Upper lobe of right lung (tissue), 1 donor: ENCODE measurements at regions of chr2 and their contacts with region 1.

Region 1: DNA sequence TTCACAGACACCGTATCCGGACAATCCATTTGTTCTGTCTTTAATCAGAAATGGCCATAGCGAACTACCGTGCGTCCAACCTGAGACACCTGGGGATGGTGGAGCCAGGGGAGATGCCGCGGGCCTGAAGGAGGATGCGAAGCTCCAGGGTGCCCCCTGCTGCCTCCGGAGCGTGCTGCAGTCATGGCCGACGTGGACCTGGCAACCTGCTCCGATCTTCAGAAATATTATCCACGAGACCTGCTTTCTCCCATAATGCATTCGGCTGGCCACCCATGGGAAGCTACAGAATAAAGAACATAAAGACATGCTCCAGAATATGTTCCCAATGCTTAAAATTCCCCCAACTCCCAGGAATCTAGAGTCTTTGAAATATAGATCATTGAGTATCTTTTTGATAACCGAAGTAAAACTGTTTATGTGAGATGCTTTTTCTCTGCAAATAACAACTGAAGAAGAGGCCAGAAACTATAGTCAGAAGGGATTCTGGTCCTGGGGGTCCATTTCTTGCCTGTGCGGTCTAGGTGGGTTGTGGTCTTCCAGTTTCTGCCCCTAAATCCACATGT is 30.7 kb upstream of the SLC66A3 start:
- DNase-seq: peak; percentile 80
- ATAC-seq: peak; percentile 83
- H3K4me3 ChIP-seq: no peak overlapping the region
- H3K27ac ChIP-seq: no peak overlapping the region
- H3K4me1 ChIP-seq: peaks cover 7% of the 10 kb centered on the region
- H3K27me3 ChIP-seq: no peaks in the 10 kb centered on the region
- CTCF ChIP-seq: peak; percentile 74

Region 2: DNA sequence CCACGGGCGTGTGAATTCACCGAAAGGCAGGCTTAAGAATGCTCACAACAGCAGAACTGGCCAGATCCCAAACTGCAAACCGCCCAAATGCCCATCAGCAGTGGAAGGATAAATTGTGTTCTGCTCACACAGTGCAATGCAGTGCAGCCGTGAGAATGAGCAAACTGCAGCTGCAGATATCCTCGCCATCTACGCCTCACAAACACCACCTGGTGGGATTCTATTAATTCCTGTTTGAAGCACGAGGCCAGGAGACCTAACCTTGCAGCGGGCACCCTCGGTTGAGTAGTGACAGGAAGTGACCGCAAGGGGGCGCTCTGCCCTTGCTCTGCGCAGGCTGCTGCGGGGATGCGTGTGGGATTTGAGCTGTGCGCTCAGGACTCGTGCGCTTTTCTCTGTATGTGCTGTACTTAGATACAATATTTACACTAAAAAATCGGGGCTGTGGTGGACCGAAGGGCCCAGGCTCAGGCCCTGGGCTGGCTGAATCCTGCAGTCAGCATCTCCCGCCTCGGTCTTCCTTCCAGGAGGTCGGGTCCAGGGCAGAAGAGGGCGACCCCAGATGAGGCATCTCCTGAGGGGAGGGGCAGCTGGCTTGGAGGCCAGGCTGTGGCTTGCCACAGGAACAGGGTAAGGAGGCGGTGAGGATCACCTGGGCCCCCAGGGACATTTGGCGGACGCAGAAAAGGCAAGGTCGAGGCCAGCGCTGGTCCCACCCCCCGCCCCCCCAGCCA is 292.2 kb before region 1 on chr2:
- intact Hi-C with region 1: loop called (anchors 5 kb)
- DNase-seq: peak; percentile 91
- ATAC-seq: peak; percentile 91
- H3K4me3 ChIP-seq: no peak overlapping the region
- H3K27ac ChIP-seq: no peak overlapping the region
- H3K4me1 ChIP-seq: no peaks in the 10 kb centered on the region
- H3K27me3 ChIP-seq: peaks cover 39% of the 10 kb centered on the region
- CTCF ChIP-seq: peak; percentile 98

Region 3: DNA sequence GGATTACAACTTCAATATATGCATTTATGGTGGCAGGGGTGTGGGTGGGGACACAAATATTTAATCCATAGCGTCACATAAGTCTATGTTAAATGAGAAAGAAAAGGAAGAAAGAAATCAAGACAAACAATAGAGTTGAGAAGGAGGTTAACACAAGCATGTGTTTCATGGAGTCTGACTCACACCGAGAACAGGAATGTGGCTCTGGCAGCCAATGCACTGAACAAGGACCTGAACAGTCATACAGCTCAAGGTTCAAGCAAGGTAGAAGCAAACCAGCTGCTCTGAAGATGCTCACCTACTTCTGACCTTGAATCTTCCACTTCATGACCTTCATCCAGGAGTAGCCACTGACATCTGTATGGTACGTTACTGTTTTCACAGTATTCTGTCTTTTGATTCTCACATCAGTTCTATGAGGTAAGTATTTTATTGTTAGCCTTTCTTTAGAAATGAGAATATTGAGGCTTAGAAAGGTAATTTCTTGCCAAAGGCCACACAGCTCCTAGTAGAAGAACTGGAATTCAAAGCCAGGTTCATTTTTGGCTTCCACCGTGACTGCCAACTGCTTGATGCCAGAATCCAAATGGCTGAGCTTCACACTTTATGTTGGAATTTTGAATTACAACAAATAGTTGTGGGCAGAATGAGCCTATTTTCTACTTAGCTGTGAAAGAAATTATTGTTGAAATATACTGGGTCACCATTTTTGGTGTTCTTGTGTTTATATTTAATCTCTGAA is 585.8 kb after region 1 on chr2:
- intact Hi-C with region 1: no loop called
- DNase-seq: no peak
- ATAC-seq: peak; percentile 51
- H3K4me3 ChIP-seq: no peak overlapping the region
- H3K27ac ChIP-seq: no peak overlapping the region
- H3K4me1 ChIP-seq: peaks cover 14% of the 10 kb centered on the region
- H3K27me3 ChIP-seq: no peaks in the 10 kb centered on the region
- CTCF ChIP-seq: no peak